A673 (cell line): ENCODE measurements at regions of chr7 and their contacts with region 1.

Region 1: GRCh38 chr7:90262438-90262837 is 17.5 kb downstream of the CFAP69 start:
- DNase-seq: peak; percentile 65
- H3K4me3 ChIP-seq: no peak overlapping the region
- H3K27ac ChIP-seq: peak overlapping the region; percentile 2
- H3K4me1 ChIP-seq: peaks cover 33% of the 10 kb centered on the region
- H3K27me3 ChIP-seq: no peaks in the 10 kb centered on the region
- CTCF ChIP-seq: peak; percentile 64

Region 2: DNA sequence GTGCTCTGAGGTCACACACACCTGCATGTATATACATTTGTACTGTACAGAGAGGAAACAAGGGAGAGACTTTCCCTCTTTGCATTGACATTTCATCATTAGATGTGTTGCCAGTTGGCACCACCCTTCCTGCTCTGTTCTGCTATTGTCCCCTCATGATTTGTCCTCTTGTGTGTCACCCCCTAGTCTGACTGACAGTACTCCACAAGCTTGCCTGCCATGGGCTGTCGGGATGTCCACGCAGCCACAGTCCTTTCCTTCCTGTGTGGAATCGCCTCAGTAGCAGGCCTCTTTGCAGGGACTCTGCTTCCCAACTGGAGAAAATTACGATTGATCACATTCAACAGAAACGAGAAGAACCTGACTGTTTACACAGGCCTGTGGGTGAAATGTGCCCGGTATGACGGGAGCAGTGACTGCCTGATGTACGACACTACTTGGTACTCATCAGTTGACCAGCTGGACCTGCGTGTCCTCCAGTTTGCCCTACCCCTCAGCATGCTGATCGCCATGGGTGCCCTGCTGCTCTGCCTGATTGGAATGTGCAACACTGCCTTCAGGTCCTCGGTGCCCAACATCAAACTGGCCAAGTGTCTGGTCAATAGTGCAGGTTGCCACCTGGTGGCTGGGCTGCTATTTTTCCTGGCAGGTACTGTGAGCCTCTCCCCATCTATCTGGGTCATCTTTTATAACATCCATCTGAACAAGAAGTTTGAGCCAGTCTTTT is 150.2 kb after region 1 on chr7:
- CTCF ChIA-PET with region 1: no interaction called
- POLR2A ChIA-PET with region 1: no interaction called
- intact Hi-C with region 1: loop called (anchors 5 kb)
- DNase-seq: peak; percentile 31
- H3K4me3 ChIP-seq: no peak overlapping the region
- H3K27ac ChIP-seq: no peak overlapping the region
- H3K4me1 ChIP-seq: peaks cover 6% of the 10 kb centered on the region
- H3K27me3 ChIP-seq: no peaks in the 10 kb centered on the region
- CTCF ChIP-seq: peak; percentile 47